ENCODE measurements at regions of chr15 and their contacts with region 1.

Region 1: GRCh38 chr15:63157118-63157843 is at the start of gene RPS27L:
- DNase-seq: peak; percentile 90
- H3K4me3 Mint-ChIP-seq: peak within 1 kb of the TSS; percentile 99
- H3K27ac Mint-ChIP-seq: peak within 1 kb of the TSS; percentile 95
- H3K4me1 Mint-ChIP-seq: no peaks in the 10 kb centered on the region
- H3K27me3 Mint-ChIP-seq: no peaks in the 10 kb centered on the region
- CTCF ChIP-seq: peak; percentile 5
- total RNA-seq, gene RPS27L: 64.4 and 66.8 TPM in 2 replicates

Region 2: DNA sequence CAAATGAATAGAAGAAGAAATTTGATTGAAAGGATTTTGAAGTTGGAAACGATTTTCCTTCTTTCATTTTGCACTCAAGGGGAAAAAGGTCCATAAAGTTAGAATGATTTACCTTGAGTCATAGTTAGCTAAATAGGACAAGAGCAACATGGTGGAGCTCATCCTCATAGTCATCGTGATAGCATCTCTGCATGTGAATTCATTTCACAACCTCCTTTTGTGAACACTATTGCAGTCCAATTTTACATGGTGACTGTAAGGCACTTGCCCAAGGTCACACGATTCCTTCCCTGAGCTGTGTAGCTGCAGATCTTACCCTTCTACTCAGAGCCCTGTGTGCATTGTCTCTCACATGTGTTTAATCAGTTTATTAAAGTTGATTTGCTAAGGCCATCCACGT is 632.4 kb before region 1 on chr15:
- CTCF ChIA-PET with region 1: no interaction called
- intact Hi-C with region 1: no loop called
- DNase-seq: no peak
- H3K4me3 Mint-ChIP-seq: no peak overlapping the region
- H3K27ac Mint-ChIP-seq: no peak overlapping the region
- H3K4me1 Mint-ChIP-seq: no peaks in the 10 kb centered on the region
- H3K27me3 Mint-ChIP-seq: peaks cover 60% of the 10 kb centered on the region
- CTCF ChIP-seq: no peak

Region 3: DNA sequence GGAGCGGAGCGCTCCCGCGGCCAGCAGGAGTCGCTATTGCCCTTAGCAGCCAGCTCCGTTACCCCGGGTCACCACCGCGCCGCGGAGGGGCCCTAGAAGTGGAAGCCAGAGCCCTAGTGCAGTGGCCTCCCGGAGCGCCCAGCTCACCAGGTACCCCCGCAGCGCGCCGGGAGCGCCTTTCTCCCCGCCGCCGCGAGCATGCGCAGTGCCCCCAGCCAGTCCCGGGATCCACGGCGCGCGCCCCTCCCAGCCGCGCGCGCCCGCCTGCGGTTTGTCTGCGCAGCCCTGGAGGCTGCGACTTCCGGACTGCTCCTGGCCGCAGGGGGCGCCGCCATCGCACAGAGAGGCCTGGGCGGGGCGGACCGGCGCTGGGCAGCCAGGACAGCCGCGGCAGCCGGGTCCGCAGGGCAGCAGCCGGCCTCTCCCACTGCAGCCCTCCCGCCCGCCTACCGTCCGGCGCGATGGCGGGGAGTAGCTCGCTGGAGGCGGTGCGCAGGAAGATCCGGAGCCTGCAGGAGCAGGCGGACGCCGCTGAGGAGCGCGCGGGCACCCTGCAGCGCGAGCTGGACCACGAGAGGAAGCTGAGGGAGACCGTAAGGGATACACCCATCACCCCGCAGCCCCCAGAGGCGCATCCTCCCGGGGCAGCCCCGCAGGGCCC is 109.0 kb before region 1 on chr15:
- CTCF ChIA-PET with region 1: no interaction called
- intact Hi-C with region 1: loop called (anchors 5 kb)
- DNase-seq: peak; percentile 99
- H3K4me3 Mint-ChIP-seq: peak overlapping the region; percentile 98
- H3K27ac Mint-ChIP-seq: peak overlapping the region; percentile 77
- H3K4me1 Mint-ChIP-seq: peaks cover 76% of the 10 kb centered on the region
- H3K27me3 Mint-ChIP-seq: no peaks in the 10 kb centered on the region
- CTCF ChIP-seq: peak; percentile 91

Region 4: GRCh38 chr15:63122002-63122893 is 35.0 kb before region 1 on chr15:
- CTCF ChIA-PET with region 1: no interaction called
- intact Hi-C with region 1: loop called (anchors 5 kb)
- DNase-seq: peak; percentile 78
- H3K4me3 Mint-ChIP-seq: peak overlapping the region; percentile 70
- H3K27ac Mint-ChIP-seq: no peak overlapping the region
- H3K4me1 Mint-ChIP-seq: peaks cover 24% of the 10 kb centered on the region
- H3K27me3 Mint-ChIP-seq: no peaks in the 10 kb centered on the region
- CTCF ChIP-seq: no peak

Region 5: GRCh38 chr15:63212050-63213004 is 55.0 kb after region 1 on chr15:
- CTCF ChIA-PET with region 1: interaction called, 7 read pairs
- intact Hi-C with region 1: loop called (anchors 10 kb)
- DNase-seq: no peak
- H3K4me3 Mint-ChIP-seq: peak overlapping the region; percentile 25
- H3K27ac Mint-ChIP-seq: peak overlapping the region; percentile 40
- H3K4me1 Mint-ChIP-seq: peaks cover 32% of the 10 kb centered on the region
- H3K27me3 Mint-ChIP-seq: no peaks in the 10 kb centered on the region
- CTCF ChIP-seq: no peak

Measured in Calu3 (cell line).